Naive thymus-derived CD4-positive, alpha-beta T cell (primary cell): ENCODE measurements at regions of chr2 and their contacts with region 1.

Region 1: DNA sequence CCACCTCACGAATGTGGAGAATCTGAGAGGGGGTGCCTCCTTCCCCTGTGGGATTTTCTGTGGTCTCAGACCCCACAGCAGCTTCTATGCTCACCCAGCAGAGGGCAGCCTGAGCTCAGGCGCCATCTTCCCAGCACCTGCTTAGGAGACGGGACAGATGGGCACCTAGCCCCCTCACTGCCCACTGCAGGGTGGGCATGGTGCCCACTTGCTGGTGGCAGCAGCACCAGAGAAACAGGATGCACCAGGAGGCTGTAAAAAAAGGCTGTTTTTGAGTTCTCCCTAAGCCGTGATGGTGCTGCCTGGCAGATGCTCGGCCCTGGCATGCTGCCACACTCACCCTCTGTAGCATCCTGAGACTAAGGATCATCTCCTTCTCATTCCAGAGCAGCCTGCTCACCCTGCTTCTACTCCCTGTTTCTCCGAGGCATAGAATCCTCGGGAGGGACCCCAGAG is 19.1 kb upstream of the SLC20A1 start:
- DNase-seq: peak; percentile 47 to 81 (median 67)
- ATAC-seq: peak; percentile 70
- H3K4me3 ChIP-seq: peak overlapping the region; percentile 61
- H3K4me3 Mint-ChIP-seq: peak overlapping the region; percentile 47 to 81 (median 72)
- H3K27ac ChIP-seq: peak overlapping the region; percentile 29
- H3K27ac Mint-ChIP-seq: peak overlapping the region in 8 of 9 donors; percentile 80 to 99 (median 94)
- H3K4me1 ChIP-seq: peaks cover 49 to 64% of the 10 kb centered on the region in 2 donors
- H3K4me1 Mint-ChIP-seq: peaks cover 34 to 88% (median 55%) of the 10 kb centered on the region in 7 donors
- H3K27me3 ChIP-seq: no peaks in the 10 kb centered on the region
- H3K27me3 Mint-ChIP-seq: no peaks in the 10 kb centered on the region

Region 2: DNA sequence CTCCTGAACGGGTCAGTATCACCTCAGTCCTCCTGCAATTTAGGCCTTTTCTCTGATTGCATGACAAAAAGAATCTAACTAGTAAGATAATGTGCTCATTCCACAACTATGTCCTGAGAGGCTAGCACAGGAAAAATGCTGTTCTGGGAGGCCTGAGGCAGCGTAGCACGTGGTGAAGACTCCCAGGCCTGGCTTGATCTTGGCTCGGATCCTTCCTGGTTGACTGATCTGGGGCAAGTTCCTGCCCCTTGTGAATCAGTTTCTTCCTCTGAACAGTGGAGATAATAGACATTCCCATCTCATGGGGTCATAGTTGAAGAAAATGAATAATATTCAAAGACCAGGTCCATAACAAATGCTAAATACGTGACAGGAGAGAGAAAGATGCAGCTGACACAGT is 476.2 kb before region 1 on chr2:
- CTCF ChIA-PET with region 1: no interaction called
- POLR2A ChIA-PET with region 1: no interaction called
- intact Hi-C with region 1: no loop called
- DNase-seq: no peak
- ATAC-seq: no peak
- H3K4me3 ChIP-seq: no peak overlapping the region
- H3K4me3 Mint-ChIP-seq: no peak overlapping the region
- H3K27ac ChIP-seq: no peak overlapping the region
- H3K27ac Mint-ChIP-seq: peak overlapping the region in 1 of 9 donors; percentile 15
- H3K4me1 ChIP-seq: peaks cover 7 to 12% of the 10 kb centered on the region in 2 donors
- H3K4me1 Mint-ChIP-seq: peaks cover 4 to 20% (median 15%) of the 10 kb centered on the region in 7 donors
- H3K27me3 ChIP-seq: no peaks in the 10 kb centered on the region
- H3K27me3 Mint-ChIP-seq: peaks cover 0 to 6% (median 0%) of the 10 kb centered on the region in 5 donors

Region 3: DNA sequence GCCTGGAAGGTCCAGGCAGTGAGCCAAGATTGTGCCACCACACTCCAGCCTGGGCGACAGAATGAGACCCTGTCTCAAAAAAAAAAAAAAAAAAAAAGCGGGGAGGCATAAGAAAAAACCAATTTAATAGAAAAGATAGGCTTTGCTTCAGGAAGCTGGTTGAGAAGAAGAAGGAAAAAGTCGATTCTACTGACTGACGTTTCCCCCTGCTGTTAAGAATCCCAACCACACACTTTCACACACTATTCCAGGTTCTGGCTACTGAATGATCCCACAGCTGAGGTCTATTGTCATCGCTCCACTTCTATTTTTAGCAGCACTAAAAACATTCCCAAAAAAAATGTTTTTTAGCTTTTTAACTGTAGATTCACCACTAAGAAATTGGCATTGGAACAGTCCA is 48.9 kb before region 1 on chr2:
- CTCF ChIA-PET with region 1: no interaction called
- POLR2A ChIA-PET with region 1: no interaction called
- intact Hi-C with region 1: no loop called
- DNase-seq: no peak
- ATAC-seq: no peak
- H3K4me3 ChIP-seq: no peak overlapping the region
- H3K4me3 Mint-ChIP-seq: no peak overlapping the region
- H3K27ac ChIP-seq: no peak overlapping the region
- H3K27ac Mint-ChIP-seq: no peak overlapping the region
- H3K4me1 ChIP-seq: no peaks in the 10 kb centered on the region
- H3K4me1 Mint-ChIP-seq: peaks cover 0 to 6% (median 2%) of the 10 kb centered on the region in 7 donors
- H3K27me3 ChIP-seq: no peaks in the 10 kb centered on the region
- H3K27me3 Mint-ChIP-seq: no peaks in the 10 kb centered on the region

Region 4: DNA sequence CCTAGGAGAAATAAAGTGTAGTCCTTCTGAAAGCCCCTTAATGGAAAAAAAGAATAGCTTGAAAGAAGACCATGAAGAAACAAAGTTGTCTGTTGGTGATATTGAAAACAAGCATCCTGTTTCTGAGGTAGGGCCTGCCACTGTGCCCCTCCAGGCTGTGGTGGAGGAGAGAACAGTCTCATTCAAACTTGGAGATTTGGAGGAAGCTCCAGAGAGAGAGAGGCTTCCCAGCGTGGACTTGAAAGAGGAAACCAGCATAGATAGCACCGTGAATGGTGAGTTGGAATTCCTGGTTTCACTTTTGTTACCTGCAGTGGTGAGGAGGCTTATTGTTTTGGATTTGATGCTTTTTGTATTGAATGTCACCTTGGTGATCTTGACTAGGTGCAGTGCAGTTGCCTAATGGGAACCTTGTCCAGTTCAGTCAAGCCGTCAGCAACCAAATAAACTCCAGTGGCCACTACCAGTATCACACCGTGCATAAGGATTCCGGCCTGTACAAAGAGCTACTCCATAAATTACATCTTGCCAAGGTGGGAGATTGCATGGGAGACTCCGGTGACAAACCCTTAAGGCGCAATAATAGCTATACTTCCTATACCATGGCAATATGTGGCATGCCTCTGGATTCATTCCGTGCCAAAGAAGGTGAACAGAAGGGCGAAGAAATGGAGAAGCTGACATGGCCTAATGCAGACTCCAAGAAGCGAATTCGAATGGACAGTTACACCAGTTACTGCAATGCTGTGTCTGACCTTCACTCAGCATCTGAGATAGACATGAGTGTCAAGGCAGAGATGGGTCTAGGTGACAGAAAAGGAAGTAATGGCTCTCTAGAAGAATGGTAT is 32.4 kb after region 1 on chr2:
- CTCF ChIA-PET with region 1: interaction called, 14 read pairs
- POLR2A ChIA-PET with region 1: interaction called, 14 read pairs
- intact Hi-C with region 1: loop called in 1 of 2 experiments (anchors 5 kb)
- DNase-seq: no peak
- ATAC-seq: no peak
- H3K4me3 ChIP-seq: no peak overlapping the region
- H3K4me3 Mint-ChIP-seq: peak overlapping the region in 2 of 10 donors; percentile 20 to 38
- H3K27ac ChIP-seq: no peak overlapping the region
- H3K27ac Mint-ChIP-seq: peak overlapping the region in 8 of 9 donors; percentile 41 to 85 (median 66)
- H3K4me1 ChIP-seq: peaks cover 0 to 22% of the 10 kb centered on the region in 2 donors
- H3K4me1 Mint-ChIP-seq: peaks cover 27 to 62% (median 40%) of the 10 kb centered on the region in 7 donors
- H3K27me3 ChIP-seq: no peaks in the 10 kb centered on the region
- H3K27me3 Mint-ChIP-seq: no peaks in the 10 kb centered on the region

Region 5: GRCh38 chr2:112726497-112727190 is 100.0 kb after region 1 on chr2:
- CTCF ChIA-PET with region 1: interaction called, 49 read pairs
- POLR2A ChIA-PET with region 1: interaction called, 3 read pairs
- intact Hi-C with region 1: loop called (anchors 1 kb)
- DNase-seq: peak; percentile 68 to 89 (median 83)
- ATAC-seq: peak; percentile 96
- H3K4me3 ChIP-seq: no peak overlapping the region
- H3K4me3 Mint-ChIP-seq: no peak overlapping the region
- H3K27ac ChIP-seq: no peak overlapping the region
- H3K27ac Mint-ChIP-seq: peak overlapping the region in 2 of 9 donors; percentile 51 to 73
- H3K4me1 ChIP-seq: no peaks in the 10 kb centered on the region
- H3K4me1 Mint-ChIP-seq: peaks cover 0 to 29% (median 0%) of the 10 kb centered on the region in 7 donors
- H3K27me3 ChIP-seq: no peaks in the 10 kb centered on the region
- H3K27me3 Mint-ChIP-seq: peaks cover 0 to 2% (median 0%) of the 10 kb centered on the region in 5 donors